ENCODE measurements at regions of chr9 and their contacts with region 1.

Region 1: GRCh38 chr9:13427587-13427986 is 148.1 kb upstream of the MPDZ start:
- DNase-seq: no peak
- H3K4me3 ChIP-seq: no peak overlapping the region
- H3K27ac ChIP-seq: peak overlapping the region in 1 of 4 donors; percentile 12
- H3K4me1 ChIP-seq: peaks cover 0 to 29% (median 22%) of the 10 kb centered on the region in 4 donors
- H3K27me3 ChIP-seq: no peaks in the 10 kb centered on the region
- CTCF ChIP-seq: peak; percentile 54 to 72 (median 60)
- EP300 ChIP-seq: no peak
- POLR2A ChIP-seq: no peak

Region 2: DNA sequence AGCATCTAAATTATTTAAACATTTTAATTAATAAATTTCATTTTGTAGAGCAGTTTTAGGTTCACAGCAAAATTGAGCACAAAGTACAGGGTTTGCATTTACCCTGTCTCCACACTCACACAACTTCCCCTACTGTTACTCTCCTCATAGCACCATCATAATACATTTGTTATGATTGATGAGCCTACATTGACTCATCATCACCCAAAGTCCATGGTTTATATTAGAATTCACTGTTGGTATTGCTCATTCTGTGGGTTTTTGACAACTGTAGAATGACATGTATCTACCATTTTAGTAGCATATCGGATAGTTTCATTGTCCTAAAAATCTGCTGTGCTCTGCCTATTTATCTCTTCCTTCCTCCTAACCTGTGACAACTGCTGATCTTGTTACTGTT is 263.0 kb after region 1 on chr9:
- intact Hi-C with region 1: loop called (anchors 5 kb)
- DNase-seq: no peak
- H3K4me3 ChIP-seq: no peak overlapping the region
- H3K27ac ChIP-seq: no peak overlapping the region
- H3K4me1 ChIP-seq: peaks cover 0 to 6% (median 5%) of the 10 kb centered on the region in 4 donors
- H3K27me3 ChIP-seq: no peaks in the 10 kb centered on the region
- CTCF ChIP-seq: no peak
- EP300 ChIP-seq: no peak
- POLR2A ChIP-seq: no peak

Region 3: DNA sequence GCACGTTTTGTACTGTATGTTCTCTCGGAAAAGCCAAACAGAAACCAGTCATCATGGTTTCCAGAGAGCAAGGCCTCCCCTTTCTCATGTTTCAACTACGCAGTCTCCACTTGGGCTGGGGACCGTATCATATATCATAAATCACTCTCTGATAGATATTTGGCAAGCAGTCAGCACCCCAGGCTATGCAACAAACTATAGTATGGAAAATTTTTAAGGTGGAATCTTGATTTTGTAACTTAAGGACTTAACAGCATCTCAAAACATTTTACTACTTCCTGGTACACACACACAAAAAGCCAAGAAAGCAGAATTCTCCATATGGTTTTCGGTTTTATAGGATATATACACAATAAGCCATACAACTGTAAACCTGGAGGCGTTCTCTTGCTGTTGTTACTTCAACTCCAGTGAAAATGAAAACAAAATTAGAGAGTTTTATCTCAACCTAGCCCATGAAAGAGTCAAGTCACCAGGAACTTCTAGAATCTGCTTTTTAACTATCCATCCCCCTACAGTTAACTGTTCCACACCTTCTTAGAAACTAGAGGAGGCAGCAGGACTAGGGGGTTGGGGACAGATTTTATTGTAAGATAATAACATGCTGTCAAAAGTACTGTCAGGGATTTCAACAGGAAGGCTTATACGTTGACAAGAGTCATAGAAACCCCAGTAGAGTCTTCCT is 602.9 kb after region 1 on chr9:
- intact Hi-C with region 1: loop called (anchors 10 kb)
- DNase-seq: no peak
- H3K4me3 ChIP-seq: peak overlapping the region in 3 of 4 donors; percentile 14 to 40 (median 30)
- H3K27ac ChIP-seq: peak overlapping the region; percentile 79 to 84 (median 81)
- H3K4me1 ChIP-seq: peaks cover 2 to 43% (median 23%) of the 10 kb centered on the region in 4 donors
- H3K27me3 ChIP-seq: no peaks in the 10 kb centered on the region
- CTCF ChIP-seq: no peak
- EP300 ChIP-seq: peak in 1 of 4 donors; percentile 58
- POLR2A ChIP-seq: no peak

Region 4: DNA sequence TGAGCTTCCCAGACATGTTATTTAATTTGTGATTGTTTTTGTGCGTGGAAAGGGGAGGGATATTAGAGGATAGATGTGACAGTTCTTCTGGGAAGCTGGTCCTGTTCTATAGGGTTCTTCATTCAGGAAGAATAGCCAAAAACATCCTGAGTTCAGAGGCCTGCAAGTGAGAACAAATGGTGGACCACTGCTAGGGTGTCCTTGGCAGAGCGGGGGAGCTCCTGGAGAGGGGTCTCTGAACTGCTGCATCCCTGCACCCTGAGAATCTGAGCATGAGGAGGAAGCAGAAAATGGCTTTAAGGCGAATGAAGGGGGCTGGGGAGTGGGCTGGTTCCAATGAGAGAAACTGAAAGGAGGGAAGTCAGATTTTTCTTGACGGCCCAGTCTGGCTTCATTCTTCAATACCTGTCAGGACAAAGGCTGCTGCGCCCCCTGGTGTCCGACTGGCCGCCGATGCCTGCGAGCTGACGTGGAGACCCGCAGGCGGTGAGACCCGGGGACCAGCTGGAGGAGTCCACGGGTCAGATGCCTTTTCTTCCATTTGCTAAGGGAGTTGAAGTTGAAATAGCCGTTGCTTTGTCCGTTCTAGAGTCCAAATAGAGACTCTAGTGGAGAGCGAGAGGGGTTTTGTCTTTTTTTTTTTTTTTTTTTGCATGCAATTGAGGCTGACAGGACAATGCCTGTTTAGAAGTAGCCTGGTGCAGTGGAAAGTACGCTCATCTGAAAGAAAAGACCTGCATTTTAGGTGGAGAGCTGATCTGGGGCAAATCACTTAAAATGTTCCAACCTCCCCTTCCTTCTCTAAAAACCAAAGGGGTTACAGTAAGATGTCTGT is 925.9 kb after region 1 on chr9:
- intact Hi-C with region 1: loop called (anchors 1 kb)
- DNase-seq: peak; percentile 96
- H3K4me3 ChIP-seq: peak overlapping the region in 3 of 4 donors; percentile 13 to 21 (median 18)
- H3K27ac ChIP-seq: peak overlapping the region; percentile 29 to 83 (median 62)
- H3K4me1 ChIP-seq: peaks cover 0 to 71% (median 34%) of the 10 kb centered on the region in 4 donors
- H3K27me3 ChIP-seq: peaks cover 6 to 24% (median 13%) of the 10 kb centered on the region in 3 donors
- CTCF ChIP-seq: peak; percentile 80 to 87 (median 83)
- EP300 ChIP-seq: no peak
- POLR2A ChIP-seq: no peak

Measured in sigmoid colon (tissue), 7 donors.